Right cardiac atrium (tissue), 5 donors: ENCODE measurements at regions of chr4 and their contacts with region 1.

Region 1: GRCh38 chr4:76949276-76950051 is at the start of gene SEPTIN11:
- DNase-seq: peak; percentile 95 to 98 (median 98)
- ATAC-seq: peak; percentile 96
- H3K4me3 ChIP-seq: peak within 1 kb of the TSS; percentile 68
- H3K27ac ChIP-seq: peak within 1 kb of the TSS; percentile 59
- H3K4me1 ChIP-seq: no peaks in the 10 kb centered on the region
- H3K27me3 ChIP-seq: no peaks in the 10 kb centered on the region
- total RNA-seq, gene SEPTIN11: 31.5 to 50.1 (median 32.8) TPM

Region 2: DNA sequence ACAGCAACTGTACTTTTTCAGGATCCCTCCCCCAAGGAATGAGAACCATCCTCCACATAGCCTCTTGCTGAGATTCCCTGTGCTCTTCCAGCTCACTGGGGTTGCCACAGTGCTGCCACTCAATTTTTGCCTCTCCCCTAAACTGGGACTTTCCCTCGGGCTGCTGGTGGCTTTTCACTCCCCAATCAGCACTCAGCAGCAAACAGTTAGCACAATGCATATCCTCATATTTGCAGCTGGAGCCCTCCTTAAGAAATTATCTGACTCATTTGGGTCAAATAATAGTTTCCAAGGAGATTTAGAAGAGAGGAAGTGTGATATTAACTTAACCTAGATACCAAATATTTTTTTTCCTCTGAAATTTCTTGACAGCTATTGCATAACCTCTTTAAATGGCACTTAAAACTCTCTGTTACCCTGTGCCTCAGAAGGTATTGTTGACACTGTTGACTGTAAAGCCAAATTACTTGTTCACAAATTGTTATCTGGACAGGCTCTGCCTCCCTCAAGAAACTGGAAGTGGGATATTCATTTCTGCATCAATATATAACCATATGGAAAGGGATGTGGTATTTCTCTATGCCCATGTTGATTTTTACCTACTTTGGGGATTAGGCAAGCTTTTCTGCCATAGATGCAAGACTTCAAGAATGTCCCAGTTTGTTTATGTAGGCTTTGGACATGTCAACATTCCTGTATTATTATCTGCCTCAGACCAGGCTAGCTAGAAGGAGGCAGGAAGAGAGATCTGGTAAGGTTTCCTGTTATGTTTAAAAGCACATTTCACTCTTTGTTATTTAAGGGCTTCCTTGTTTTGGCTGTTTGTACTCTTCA is 58.1 kb after region 1 on chr4:
- intact Hi-C with region 1: loop called in 1 of 4 experiments (anchors 10 kb)
- DNase-seq: peak in 2 of 3 donors; percentile 55 to 57
- ATAC-seq: peak; percentile 79 to 91
- H3K4me3 ChIP-seq: no peak overlapping the region
- H3K27ac ChIP-seq: peak overlapping the region; percentile 49
- H3K4me1 ChIP-seq: peaks cover 12% of the 10 kb centered on the region
- H3K27me3 ChIP-seq: no peaks in the 10 kb centered on the region